ENCODE measurements at regions of chr2 and their contacts with region 1.

Region 1: GRCh38 chr2:230798769-230799399 is 65.9 kb upstream of the ITM2C start:
- DNase-seq: no peak
- H3K4me3 ChIP-seq: no peak overlapping the region
- H3K27ac ChIP-seq: peak overlapping the region in 5 of 8 donors; percentile 9 to 85 (median 67)
- H3K4me1 ChIP-seq: peaks cover 13 to 55% (median 46%) of the 10 kb centered on the region in 6 donors
- H3K27me3 ChIP-seq: no peaks in the 10 kb centered on the region
- CTCF ChIP-seq: peak in 9 of 11 experiments; percentile 23 to 68 (median 53)
- POLR2A ChIP-seq: no peak

Region 2: GRCh38 chr2:230712443-230713330 is 86.2 kb before region 1 on chr2 and contains the start of gene CAB39:
- intact Hi-C with region 1: loop called (anchors 10 kb)
- DNase-seq: peak; percentile 98
- H3K4me3 ChIP-seq: peak within 1 kb of the TSS; percentile 80 to 98 (median 90)
- H3K27ac ChIP-seq: peak within 1 kb of the TSS; percentile 87 to 98 (median 94)
- H3K4me1 ChIP-seq: peaks cover 22 to 78% (median 54%) of the 10 kb centered on the region in 6 donors
- H3K27me3 ChIP-seq: no peaks in the 10 kb centered on the region
- CTCF ChIP-seq: peak; percentile 29 to 98 (median 92)
- POLR2A ChIP-seq: peak in 1 of 3 donors; percentile 45
- total RNA-seq, gene CAB39: 74.8 to 120 (median 85.1) TPM

Region 3: DNA sequence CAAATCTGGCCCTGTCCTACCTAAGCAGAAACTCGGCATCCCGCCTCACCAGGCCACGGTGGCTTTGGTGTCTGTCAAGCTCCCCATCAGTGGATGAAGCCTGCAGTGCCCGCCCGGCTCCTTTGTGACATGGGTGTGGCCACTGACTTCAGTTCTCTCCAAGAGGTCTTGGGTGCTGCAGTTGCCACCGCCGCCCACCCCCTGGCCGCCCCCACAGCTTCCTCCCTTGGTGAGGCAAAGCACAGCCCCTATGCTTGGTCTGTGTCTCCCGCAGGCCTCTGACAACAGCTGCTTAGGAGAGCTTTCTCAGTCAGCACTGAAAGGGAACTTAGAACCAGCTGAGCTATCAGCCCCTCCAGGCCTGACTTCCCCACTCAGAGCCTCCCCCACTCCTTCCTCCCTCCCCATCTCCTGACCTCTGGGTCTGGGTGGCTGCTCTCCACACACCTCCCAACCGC is 149.1 kb after region 1 on chr2:
- intact Hi-C with region 1: no loop called
- DNase-seq: peak; percentile 70
- H3K4me3 ChIP-seq: no peak overlapping the region
- H3K27ac ChIP-seq: peak overlapping the region in 2 of 8 donors; percentile 1 to 15
- H3K4me1 ChIP-seq: peaks cover 0 to 16% (median 7%) of the 10 kb centered on the region in 6 donors
- H3K27me3 ChIP-seq: peaks cover 0 to 6% (median 0%) of the 10 kb centered on the region in 7 donors
- CTCF ChIP-seq: no peak
- POLR2A ChIP-seq: no peak

Region 4: DNA sequence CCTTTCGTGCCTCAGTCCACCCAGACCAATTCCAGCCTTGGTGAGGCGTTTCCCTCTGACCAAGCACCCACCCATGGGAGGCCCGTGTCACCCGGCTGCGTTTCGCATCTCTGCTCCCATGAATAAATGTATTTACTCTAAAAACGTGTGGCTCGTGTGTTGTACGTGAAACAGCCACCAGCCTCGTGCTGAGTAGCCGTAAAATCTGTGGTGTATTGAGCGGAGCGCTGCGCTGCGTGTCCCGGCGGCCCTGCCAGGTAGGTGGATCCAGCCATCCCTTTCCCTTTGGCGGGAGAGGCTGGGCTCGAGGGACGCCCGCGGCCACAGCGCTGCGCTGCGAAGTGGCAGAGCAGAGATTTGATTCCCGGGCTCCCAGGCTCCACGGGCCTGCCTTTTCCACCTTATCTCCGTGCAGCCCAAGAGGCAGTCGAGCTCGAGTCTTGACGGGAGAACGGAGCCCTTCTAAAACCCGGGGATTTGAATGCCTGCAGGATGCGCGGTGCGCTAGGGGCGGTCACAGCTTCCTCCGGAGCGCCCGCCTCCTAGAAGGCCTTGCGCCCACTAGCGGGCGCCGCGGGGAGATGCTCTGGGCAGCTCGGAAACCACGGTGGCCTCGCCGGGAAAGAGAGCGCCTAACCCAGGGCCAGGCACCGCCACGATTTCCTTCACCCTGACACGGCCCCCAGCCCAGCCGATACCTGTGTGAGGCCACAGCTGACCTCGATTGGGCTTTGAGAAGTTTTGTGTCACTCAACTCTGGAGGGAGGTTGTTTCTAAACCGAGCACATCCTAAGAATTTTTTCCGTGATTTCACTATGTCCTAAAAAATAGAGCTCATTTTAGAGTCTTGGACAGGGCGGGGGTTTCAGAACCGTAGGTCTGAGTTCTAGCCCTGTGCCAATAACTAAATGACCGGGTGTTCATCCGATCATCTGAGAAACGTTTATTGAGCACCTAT is 253.9 kb after region 1 on chr2:
- intact Hi-C with region 1: no loop called
- DNase-seq: peak; percentile 97
- H3K4me3 ChIP-seq: peak overlapping the region; percentile 58 to 80 (median 65)
- H3K27ac ChIP-seq: peak overlapping the region in 6 of 8 donors; percentile 4 to 61 (median 44)
- H3K4me1 ChIP-seq: peaks cover 8 to 38% (median 27%) of the 10 kb centered on the region in 6 donors
- H3K27me3 ChIP-seq: peaks cover 0 to 42% (median 0%) of the 10 kb centered on the region in 7 donors
- CTCF ChIP-seq: peak; percentile 54 to 98 (median 94)
- POLR2A ChIP-seq: no peak

Region 5: GRCh38 chr2:231170055-231170454 is 371.2 kb after region 1 on chr2:
- intact Hi-C with region 1: no loop called
- DNase-seq: no peak
- H3K4me3 ChIP-seq: no peak overlapping the region
- H3K27ac ChIP-seq: no peak overlapping the region
- H3K4me1 ChIP-seq: peaks cover 0 to 22% (median 0%) of the 10 kb centered on the region in 6 donors
- H3K27me3 ChIP-seq: no peaks in the 10 kb centered on the region
- CTCF ChIP-seq: no peak
- POLR2A ChIP-seq: no peak

Region 6: GRCh38 chr2:231752061-231752460 is 953.2 kb after region 1 on chr2:
- intact Hi-C with region 1: no loop called
- DNase-seq: no peak
- H3K4me3 ChIP-seq: no peak overlapping the region
- H3K27ac ChIP-seq: no peak overlapping the region
- H3K4me1 ChIP-seq: no peaks in the 10 kb centered on the region
- H3K27me3 ChIP-seq: no peaks in the 10 kb centered on the region
- CTCF ChIP-seq: no peak
- POLR2A ChIP-seq: no peak

Measured in spleen (tissue), 13 donors.